ENCODE measurements at regions of chrX and their contacts with region 1.

Region 1: GRCh38 chrX:119685225-119686066 is 7.5 kb downstream of the SEPTIN6 start:
- DNase-seq: peak; percentile 80
- H3K4me3 Mint-ChIP-seq: peak overlapping the region; percentile 84
- H3K27ac Mint-ChIP-seq: peak overlapping the region; percentile 100
- H3K4me1 Mint-ChIP-seq: peaks cover 50% of the 10 kb centered on the region
- H3K27me3 Mint-ChIP-seq: no peaks in the 10 kb centered on the region

Region 2: DNA sequence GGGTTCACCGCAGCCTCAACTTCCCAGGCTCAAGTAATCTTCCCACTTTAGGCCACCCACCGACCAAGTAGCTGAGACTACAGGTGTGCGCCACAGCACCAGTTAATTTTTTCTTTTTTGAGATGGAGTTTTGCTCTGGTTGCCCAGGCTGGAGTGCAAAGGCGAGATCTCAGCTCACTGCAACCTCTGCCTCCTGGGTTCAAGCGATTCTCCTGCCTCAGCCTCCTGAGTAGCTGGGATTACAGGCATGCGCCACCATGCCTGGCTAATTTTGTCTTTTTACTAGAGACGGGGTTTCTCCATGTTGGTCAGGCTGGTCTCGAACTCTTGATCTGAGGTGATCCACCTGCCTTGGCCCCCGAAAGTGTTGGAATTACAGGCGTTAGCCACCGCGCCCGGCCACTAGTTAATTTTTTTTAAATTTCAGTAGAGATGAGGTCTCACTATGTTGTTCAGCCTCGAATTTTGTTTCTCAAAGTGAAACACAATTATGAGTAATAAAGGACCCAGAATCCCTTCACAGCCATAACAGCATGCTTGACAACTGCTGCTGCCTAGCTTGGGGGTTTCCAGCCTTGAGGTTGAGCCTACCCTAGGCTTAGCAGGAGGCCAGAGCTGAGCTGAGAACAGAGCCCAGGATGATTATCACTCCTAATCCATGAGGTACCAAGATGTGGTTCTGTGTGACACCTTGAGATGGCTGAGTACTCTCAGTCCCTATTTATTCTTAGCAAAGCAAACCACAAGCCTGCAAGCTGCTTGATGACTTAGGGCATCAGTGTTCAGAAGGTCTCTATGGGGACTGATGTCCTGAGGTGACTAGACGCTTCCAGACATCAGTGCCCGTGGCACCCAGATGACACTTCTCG is 37.7 kb before region 1 on chrX:
- CTCF ChIA-PET with region 1: interaction called, 3 read pairs
- intact Hi-C with region 1: loop called (anchors 1 kb)
- DNase-seq: peak; percentile 84
- H3K4me3 Mint-ChIP-seq: no peak overlapping the region
- H3K27ac Mint-ChIP-seq: peak overlapping the region; percentile 89
- H3K4me1 Mint-ChIP-seq: peaks cover 32% of the 10 kb centered on the region
- H3K27me3 Mint-ChIP-seq: no peaks in the 10 kb centered on the region

Region 3: GRCh38 chrX:120697053-120697452 is 1011.6 kb after region 1 on chrX:
- CTCF ChIA-PET with region 1: no interaction called
- intact Hi-C with region 1: no loop called
- DNase-seq: peak; percentile 69
- H3K4me3 Mint-ChIP-seq: no peak overlapping the region
- H3K27ac Mint-ChIP-seq: peak overlapping the region; percentile 83
- H3K4me1 Mint-ChIP-seq: peaks cover 27% of the 10 kb centered on the region
- H3K27me3 Mint-ChIP-seq: no peaks in the 10 kb centered on the region

Measured in activated naive CD4-positive, alpha-beta T cell treated with anti-CD3 and anti-CD28 coated beads for 36 hours (primary cell).